WTC11 (cell line): ENCODE measurements at regions of chr1 and their contacts with region 1.

Region 1: GRCh38 chr1:225777583-225778336 is at the start of gene SRP9:
- DNase-seq: peak; percentile 100
- ATAC-seq: peak; percentile 97
- H3K4me3 Mint-ChIP-seq: no peak within 1 kb of the TSS
- H3K27ac Mint-ChIP-seq: no peak within 1 kb of the TSS
- H3K4me1 Mint-ChIP-seq: peaks cover 40% of the 10 kb centered on the region
- H3K27me3 Mint-ChIP-seq: no peaks in the 10 kb centered on the region
- CTCF ChIP-seq: peak; percentile 65
- total RNA-seq, gene SRP9: 374 to 395 TPM (median 375 TPM) in 3 replicates

Region 2: GRCh38 chr1:225766967-225767633 is 10.7 kb before region 1 on chr1:
- CTCF ChIA-PET with region 1: interaction called, 22 read pairs
- POLR2A ChIA-PET with region 1: interaction called, 7 read pairs
- DNase-seq: no peak
- ATAC-seq: no peak
- H3K4me3 Mint-ChIP-seq: no peak overlapping the region
- H3K27ac Mint-ChIP-seq: peak overlapping the region; percentile 57; the same call in 1 of the 2 replicates
- H3K4me1 Mint-ChIP-seq: peaks cover 58% of the 10 kb centered on the region
- H3K27me3 Mint-ChIP-seq: no peaks in the 10 kb centered on the region; the same call in 1 of the 2 replicates
- CTCF ChIP-seq: no peak

Region 3: DNA sequence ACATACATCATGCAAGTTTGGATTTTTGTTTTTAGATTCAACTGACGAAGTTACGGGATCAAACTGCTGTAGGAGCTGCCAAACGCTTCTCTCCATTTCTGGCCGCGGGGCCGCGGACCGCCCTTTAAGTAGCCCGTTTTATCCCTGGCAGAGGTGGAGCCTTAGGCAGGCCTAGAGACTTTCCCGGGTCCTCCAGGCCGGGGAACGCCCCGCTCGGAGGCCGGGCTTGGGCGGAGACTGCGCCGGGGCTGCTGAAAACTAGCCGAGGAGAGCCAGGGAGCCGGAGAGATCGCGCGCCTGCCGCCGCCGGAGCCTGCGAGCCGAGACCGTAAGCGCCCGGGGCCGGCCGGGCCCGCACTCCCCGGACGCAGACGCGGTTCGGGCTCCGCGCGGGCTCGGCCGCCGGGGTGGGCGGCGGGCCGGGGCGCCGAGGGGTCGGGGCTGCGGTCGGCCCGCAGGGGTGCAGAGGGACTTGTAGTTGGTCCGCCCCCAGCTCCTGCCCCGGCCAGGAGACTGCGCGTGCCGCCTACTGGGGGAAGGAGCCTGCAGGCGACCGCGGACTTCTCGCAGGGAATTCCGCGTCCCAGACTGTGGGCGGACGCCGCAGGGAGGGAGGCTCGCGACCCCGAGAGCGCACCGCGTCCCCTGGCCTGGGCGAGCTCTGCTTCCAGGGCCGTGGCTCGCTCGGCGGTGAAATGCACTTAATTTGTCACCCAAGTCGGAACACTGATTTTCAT is 32.2 kb after region 1 on chr1 and contains the start of gene EPHX1:
- CTCF ChIA-PET with region 1: interaction called, 45 read pairs
- POLR2A ChIA-PET with region 1: interaction called, 10 read pairs
- DNase-seq: peak; percentile 93
- ATAC-seq: peak; percentile 90
- H3K4me3 Mint-ChIP-seq: peak within 1 kb of the TSS; percentile 86
- H3K27ac Mint-ChIP-seq: peak within 1 kb of the TSS; percentile 68
- H3K4me1 Mint-ChIP-seq: peaks cover 30% of the 10 kb centered on the region
- H3K27me3 Mint-ChIP-seq: peaks cover 3% of the 10 kb centered on the region; the same call in 1 of the 2 replicates
- CTCF ChIP-seq: no peak
- total RNA-seq, gene EPHX1: 60.9 to 66.2 TPM (median 64.4 TPM) in 3 replicates

Region 4: DNA sequence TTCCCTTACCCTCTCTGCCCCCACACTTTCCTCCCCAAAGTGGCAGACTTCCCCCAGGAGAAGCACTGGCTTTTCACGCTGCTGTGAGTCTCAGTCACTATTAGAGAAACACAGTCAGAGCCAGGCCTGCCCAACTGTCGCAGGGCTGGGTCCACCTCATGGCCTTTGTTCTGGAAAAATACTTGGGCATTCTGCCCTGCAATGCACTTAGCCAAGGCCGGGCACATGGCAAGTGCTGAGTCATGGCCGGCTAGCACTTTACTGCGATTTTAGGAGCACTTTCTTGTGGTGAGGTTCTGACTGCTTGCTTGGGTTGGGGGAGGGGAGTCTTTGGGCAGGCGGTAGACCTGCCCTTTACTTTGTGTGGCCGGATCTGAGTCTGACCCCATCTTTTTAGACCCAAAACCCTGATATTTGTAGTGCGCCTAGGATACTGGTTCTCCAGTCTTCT is 39.9 kb after region 1 on chr1:
- CTCF ChIA-PET with region 1: interaction called, 45 read pairs
- POLR2A ChIA-PET with region 1: interaction called, 5 read pairs
- DNase-seq: no peak
- ATAC-seq: peak; percentile 27
- H3K4me3 Mint-ChIP-seq: no peak overlapping the region
- H3K27ac Mint-ChIP-seq: peak overlapping the region; percentile 71
- H3K4me1 Mint-ChIP-seq: peaks cover 49% of the 10 kb centered on the region
- H3K27me3 Mint-ChIP-seq: no peaks in the 10 kb centered on the region; the same call in 1 of the 2 replicates
- CTCF ChIP-seq: no peak

Region 5: DNA sequence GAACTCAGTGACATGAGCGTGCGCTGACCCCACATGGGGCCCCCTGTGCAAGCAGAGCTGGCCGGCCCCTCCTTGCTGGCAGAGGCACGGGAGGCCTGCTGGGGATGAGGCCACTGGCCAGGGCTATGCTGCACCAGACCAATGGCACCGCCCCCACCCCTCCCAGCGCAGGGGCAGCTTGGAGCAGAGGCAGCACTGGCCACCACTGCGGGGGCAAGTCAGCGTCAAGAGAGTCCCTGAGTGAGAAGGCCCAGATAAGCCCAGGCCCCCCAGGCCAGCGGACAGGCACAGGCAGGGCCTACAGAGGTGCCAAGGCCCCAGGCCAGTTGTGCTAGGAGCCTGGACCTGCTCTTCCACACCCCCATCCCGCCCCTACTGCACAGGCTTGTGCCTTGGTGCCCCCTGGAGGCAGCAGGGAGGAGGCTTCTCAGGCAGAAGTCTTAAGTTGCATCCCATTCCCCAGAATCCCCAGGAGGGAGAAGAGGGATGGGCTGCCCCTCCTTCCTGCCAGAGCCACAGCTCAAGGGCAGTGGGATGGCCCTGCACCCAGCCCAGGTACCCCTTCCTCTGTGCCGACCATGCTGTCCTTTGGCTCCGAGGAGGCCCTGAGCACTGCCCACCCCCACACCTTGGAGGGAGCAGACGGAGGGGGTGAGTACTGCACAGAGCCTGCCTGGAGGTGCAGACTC is 68.0 kb after region 1 on chr1:
- CTCF ChIA-PET with region 1: interaction called, 20 read pairs
- POLR2A ChIA-PET with region 1: interaction called, 5 read pairs
- DNase-seq: peak; percentile 90
- ATAC-seq: peak; percentile 82
- H3K4me3 Mint-ChIP-seq: no peak overlapping the region
- H3K27ac Mint-ChIP-seq: peak overlapping the region; percentile 87
- H3K4me1 Mint-ChIP-seq: peaks cover 12% of the 10 kb centered on the region
- H3K27me3 Mint-ChIP-seq: no peaks in the 10 kb centered on the region
- CTCF ChIP-seq: peak; percentile 61